Activated CD8-positive, alpha-beta memory T cell treated with anti-CD3 and anti-CD28 coated beads, Interleukin-2, amount 10 ng/mL, durations not matched to agents 7 days and 5 days (primary cell): ENCODE measurements at regions of chr3 and their contacts with region 1.

Region 1: DNA sequence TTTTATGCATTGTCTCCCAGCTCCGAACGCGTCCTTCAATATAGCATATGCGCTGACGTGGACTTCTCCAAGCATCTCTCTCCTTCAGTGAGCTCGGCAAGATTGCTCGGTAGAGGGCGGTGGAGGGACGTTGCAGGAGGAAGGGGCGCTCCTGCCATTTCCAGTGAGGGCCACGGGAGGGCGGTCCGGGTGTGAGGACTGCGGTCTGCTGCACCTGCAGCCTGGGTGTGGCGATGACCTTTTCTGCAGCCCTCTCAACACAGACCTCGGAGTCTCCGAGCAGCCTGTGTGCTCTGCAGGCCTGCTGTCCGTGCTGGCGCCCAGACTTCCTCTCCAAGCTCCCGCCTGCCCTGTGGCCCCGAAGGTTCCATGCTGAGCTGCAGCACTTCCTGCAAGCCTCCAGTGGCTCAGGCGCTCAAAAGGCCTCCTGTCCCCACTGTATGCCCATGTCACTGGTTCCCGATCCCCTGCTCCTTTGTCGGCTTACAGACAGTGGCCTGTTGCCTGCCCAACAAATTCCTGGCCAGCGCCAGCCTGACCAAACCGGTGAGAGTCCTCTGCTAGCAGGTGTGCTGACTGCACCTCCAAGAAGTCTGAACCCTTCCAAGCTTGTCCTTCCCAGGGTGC is 8.9 kb upstream of the RTP3 start:
- DNase-seq: peak; percentile 97
- ATAC-seq: peak; percentile 99
- H3K4me3 Mint-ChIP-seq: peak overlapping the region; percentile 29
- H3K27ac Mint-ChIP-seq: peak overlapping the region; percentile 57
- H3K4me1 Mint-ChIP-seq: peaks cover 25% of the 10 kb centered on the region
- H3K27me3 Mint-ChIP-seq: peaks cover 20% of the 10 kb centered on the region

Region 2: GRCh38 chr3:46348823-46349484 is 139.9 kb before region 1 on chr3:
- CTCF ChIA-PET with region 1: no interaction called
- DNase-seq: peak; percentile 52
- ATAC-seq: no peak
- H3K4me3 Mint-ChIP-seq: peak overlapping the region; percentile 25
- H3K27ac Mint-ChIP-seq: peak overlapping the region; percentile 93
- H3K4me1 Mint-ChIP-seq: peaks cover 63% of the 10 kb centered on the region
- H3K27me3 Mint-ChIP-seq: peaks cover 5% of the 10 kb centered on the region

Region 3: GRCh38 chr3:46442576-46443562 is 46.0 kb before region 1 on chr3:
- CTCF ChIA-PET with region 1: interaction called, 21 read pairs
- DNase-seq: no peak
- ATAC-seq: no peak
- H3K4me3 Mint-ChIP-seq: no peak overlapping the region
- H3K27ac Mint-ChIP-seq: no peak overlapping the region
- H3K4me1 Mint-ChIP-seq: peaks cover 28% of the 10 kb centered on the region
- H3K27me3 Mint-ChIP-seq: peaks cover 4% of the 10 kb centered on the region

Region 4: GRCh38 chr3:46477145-46477544 is 11.7 kb before region 1 on chr3:
- CTCF ChIA-PET with region 1: interaction called, 12 read pairs
- DNase-seq: peak; percentile 28
- ATAC-seq: no peak
- H3K4me3 Mint-ChIP-seq: no peak overlapping the region
- H3K27ac Mint-ChIP-seq: no peak overlapping the region
- H3K4me1 Mint-ChIP-seq: no peaks in the 10 kb centered on the region
- H3K27me3 Mint-ChIP-seq: peaks cover 58% of the 10 kb centered on the region

Region 5: DNA sequence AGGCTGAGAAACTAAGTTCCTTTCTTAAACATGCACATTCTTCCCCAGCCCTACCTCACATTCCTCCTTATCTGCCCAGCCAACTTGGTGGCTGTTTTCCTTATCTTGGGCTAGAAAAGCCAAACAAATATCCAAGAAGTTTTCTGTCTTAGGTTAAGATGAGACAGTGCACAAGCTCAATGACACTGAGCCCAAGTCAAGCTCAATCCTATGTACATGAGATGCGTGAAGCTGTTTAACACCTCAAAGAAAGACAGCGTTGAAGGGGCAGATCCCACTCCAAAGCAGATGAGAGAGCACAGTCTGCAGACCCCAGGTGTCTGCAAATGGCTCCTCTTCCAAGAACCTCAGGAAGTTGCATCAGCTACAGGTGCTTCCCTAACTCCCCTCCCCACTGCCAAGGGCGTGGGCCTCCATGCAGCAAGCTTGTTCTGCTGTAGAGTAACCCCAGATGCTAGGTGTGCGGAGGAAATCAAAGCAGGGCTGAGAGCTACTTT is 60.6 kb after region 1 on chr3:
- CTCF ChIA-PET with region 1: interaction called, 85 read pairs
- DNase-seq: peak; percentile 38
- ATAC-seq: no peak
- H3K4me3 Mint-ChIP-seq: no peak overlapping the region
- H3K27ac Mint-ChIP-seq: no peak overlapping the region
- H3K4me1 Mint-ChIP-seq: peaks cover 30% of the 10 kb centered on the region
- H3K27me3 Mint-ChIP-seq: peaks cover 14% of the 10 kb centered on the region

Region 6: DNA sequence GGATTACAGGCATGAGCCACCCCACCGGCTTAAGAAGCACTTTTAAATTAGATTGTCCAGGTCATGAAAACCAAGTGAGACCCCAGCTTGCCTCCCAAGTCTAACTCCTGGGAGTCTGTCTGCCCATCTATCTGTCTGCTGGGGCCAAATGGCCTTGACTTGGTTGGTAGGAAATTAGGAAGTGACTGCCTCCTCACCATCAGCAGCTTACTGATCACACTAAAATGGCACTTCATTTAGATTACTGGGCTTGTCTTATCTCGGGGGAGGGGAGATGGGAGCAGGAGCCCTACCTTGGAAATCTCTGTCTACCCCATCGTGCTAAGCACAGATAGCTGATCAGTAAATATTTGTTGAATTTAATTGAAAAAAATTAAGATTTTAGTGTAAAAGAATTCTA is 82.8 kb after region 1 on chr3:
- CTCF ChIA-PET with region 1: interaction called, 15 read pairs
- DNase-seq: peak; percentile 36
- ATAC-seq: no peak
- H3K4me3 Mint-ChIP-seq: no peak overlapping the region
- H3K27ac Mint-ChIP-seq: no peak overlapping the region
- H3K4me1 Mint-ChIP-seq: no peaks in the 10 kb centered on the region
- H3K27me3 Mint-ChIP-seq: peaks cover 43% of the 10 kb centered on the region

Region 7: DNA sequence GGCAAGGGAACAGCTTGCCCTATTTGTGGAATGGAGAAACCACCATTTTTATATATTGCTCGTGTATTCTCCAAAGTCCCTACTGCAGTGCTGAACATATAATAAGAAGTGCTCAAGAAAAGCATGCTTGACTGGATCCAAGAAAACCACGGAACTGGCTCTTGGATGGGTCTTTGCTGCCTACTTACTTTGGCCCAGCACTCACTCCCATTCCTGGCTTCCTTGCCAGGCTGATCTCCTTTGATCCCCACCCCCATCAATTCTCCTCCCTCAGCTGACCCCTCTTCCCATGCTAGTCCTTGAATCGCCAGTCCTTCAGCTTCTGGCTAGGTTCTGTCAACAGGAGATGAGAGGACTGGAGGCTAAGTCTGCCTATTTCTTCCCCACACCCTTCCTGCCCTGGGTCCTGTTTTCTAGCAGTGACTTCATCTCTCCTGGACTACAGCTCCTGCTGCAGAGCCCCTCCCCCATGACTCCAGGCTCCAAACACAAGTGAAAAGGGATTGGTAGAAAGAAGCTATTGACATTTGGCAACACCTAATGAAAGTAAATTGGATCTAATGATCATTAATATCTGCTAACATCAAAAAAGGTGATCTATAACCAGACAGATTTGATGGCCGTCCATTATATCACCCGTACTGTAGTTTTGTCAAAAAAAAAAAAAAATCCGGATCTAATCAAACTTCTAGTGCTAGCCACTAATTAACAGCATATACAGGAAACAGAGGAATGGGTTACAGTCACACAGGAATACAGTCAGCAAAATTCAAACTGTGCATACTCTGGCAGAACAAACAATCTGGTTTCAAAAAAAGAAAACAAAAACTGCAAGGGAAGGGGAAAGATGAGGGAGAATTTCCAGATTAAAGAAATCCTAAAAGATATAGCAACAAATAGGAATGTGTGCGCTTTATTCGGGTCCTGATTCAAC is 131.3 kb after region 1 on chr3:
- CTCF ChIA-PET with region 1: interaction called, 228 read pairs
- DNase-seq: no peak
- ATAC-seq: no peak
- H3K4me3 Mint-ChIP-seq: no peak overlapping the region
- H3K27ac Mint-ChIP-seq: no peak overlapping the region
- H3K4me1 Mint-ChIP-seq: no peaks in the 10 kb centered on the region
- H3K27me3 Mint-ChIP-seq: peaks cover 52% of the 10 kb centered on the region